Panc1 (cell line): ENCODE measurements at regions of chr11 and their contacts with region 1.

Region 1: DNA sequence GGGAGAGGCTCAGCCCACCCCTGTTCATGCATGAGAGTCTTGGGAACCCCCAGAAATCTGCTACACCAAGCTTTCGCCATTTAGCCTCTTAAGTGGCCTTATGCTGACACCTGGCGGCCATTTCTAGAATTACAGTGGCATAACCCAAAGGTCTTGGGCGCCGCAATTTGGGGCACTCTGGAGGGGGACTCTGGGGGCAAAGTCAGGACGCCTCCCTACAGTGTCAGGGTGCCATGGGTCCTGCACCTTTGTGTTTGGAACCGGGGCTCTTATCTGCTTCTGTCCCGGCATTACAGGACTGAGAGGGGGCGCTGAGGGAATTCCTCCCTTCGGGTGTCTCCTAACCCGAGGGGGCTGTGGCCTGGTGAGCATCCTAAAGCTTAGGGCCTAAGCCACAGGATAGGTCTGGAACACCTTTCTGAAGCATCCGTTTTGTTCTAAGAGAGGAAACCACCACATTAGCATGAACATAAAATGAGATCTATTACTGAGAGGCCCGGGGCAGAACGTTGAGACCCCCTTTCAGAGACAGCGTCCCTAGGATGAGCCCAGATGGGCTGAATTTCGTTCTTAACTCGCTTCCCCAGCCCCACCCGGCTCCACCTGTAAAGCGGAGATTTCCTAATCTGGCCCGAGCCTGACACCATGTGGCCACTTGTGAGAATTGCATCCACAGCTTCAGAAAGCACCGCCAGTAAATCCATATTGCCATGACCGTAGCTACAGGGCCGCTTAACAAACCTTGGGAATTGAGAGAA is 9.3 kb downstream of the INS start:
- DNase-seq: peak; percentile 83
- ATAC-seq: peak; percentile 52
- H3K4me3 ChIP-seq: no peak overlapping the region
- H3K27ac ChIP-seq: no peak overlapping the region
- H3K4me1 ChIP-seq: peaks cover 15% of the 10 kb centered on the region
- H3K27me3 ChIP-seq: peaks cover 10% of the 10 kb centered on the region
- CTCF ChIP-seq: peak; percentile 96

Region 2: DNA sequence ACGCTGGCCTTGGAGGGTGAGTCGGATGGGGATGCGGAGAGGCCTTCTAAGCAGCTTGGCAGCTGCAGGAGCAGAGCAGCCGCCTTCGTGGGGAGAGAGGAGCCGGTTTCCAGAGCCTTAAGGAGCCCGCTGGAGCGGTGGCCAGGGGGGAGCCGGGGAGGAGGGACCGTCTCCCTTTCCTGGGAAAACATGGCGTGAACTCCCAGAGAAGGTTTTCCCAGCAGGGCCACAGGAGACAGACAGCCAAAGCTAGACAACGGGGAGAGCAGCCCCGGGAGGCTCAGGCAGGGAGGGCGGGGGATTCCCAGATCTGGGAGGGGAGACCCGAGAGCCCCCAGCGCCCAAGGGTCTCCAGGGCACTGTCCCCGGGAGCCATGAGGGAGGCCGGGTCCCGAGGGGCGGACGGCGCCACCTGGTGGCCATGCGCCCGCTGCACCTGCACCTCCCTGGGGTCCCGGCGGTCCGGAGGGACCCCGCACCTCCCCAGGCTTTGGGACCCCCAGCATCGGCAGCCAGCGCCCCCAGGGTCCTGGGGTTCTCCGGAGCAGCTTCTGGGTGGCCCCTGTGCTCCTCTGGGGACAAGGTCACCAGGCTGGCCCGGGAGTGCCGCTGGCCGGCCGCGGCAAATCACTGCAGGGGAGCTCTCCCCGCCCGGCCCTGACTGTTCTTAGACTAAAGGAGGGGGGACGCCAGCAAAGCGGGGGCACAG is 319.3 kb before region 1 on chr11:
- CTCF ChIA-PET with region 1: interaction called, 12 read pairs
- POLR2A ChIA-PET with region 1: no interaction called
- in situ Hi-C with region 1: no loop called
- intact Hi-C with region 1: no loop called
- DNase-seq: no peak
- ATAC-seq: peak; percentile 56
- H3K4me3 ChIP-seq: peak overlapping the region; percentile 17 to 40; a peak in 3 of 4 replicates
- H3K27ac ChIP-seq: peak overlapping the region; percentile 99
- H3K4me1 ChIP-seq: peaks cover 85% of the 10 kb centered on the region
- H3K27me3 ChIP-seq: no peaks in the 10 kb centered on the region
- CTCF ChIP-seq: peak; percentile 100

Region 3: GRCh38 chr11:1882519-1883238 is 269.0 kb before region 1 on chr11:
- CTCF ChIA-PET with region 1: interaction called, 26 read pairs
- POLR2A ChIA-PET with region 1: no interaction called
- in situ Hi-C with region 1: no loop called
- intact Hi-C with region 1: loop called (anchors 2 kb)
- DNase-seq: peak; percentile 22
- ATAC-seq: peak; percentile 93
- H3K4me3 ChIP-seq: no peak overlapping the region
- H3K27ac ChIP-seq: no peak overlapping the region
- H3K4me1 ChIP-seq: peaks cover 2% of the 10 kb centered on the region; the same call in 1 of the 2 replicates
- H3K27me3 ChIP-seq: no peaks in the 10 kb centered on the region
- CTCF ChIP-seq: peak; percentile 100

Region 4: GRCh38 chr11:2027708-2028107 is 124.0 kb before region 1 on chr11:
- CTCF ChIA-PET with region 1: interaction called, 236 read pairs
- POLR2A ChIA-PET with region 1: no interaction called
- in situ Hi-C with region 1: no loop called
- intact Hi-C with region 1: no loop called
- DNase-seq: no peak
- ATAC-seq: peak; percentile 15
- H3K4me3 ChIP-seq: no peak overlapping the region
- H3K27ac ChIP-seq: no peak overlapping the region
- H3K4me1 ChIP-seq: no peaks in the 10 kb centered on the region
- H3K27me3 ChIP-seq: no peaks in the 10 kb centered on the region
- CTCF ChIP-seq: no peak

Region 5: GRCh38 chr11:2138436-2139122 is 13.1 kb before region 1 on chr11:
- CTCF ChIA-PET with region 1: interaction called, 16 read pairs
- POLR2A ChIA-PET with region 1: no interaction called
- in situ Hi-C with region 1: no loop called
- intact Hi-C with region 1: no loop called
- DNase-seq: no peak
- ATAC-seq: peak; percentile 10; the same call in 1 of the 2 replicates
- H3K4me3 ChIP-seq: peak overlapping the region; percentile 21 to 50
- H3K27ac ChIP-seq: no peak overlapping the region
- H3K4me1 ChIP-seq: peaks cover 8% of the 10 kb centered on the region
- H3K27me3 ChIP-seq: peaks cover 31% of the 10 kb centered on the region
- CTCF ChIP-seq: no peak